Posterior cingulate gyrus (tissue), 11 donors: ENCODE measurements at regions of chr6 and their contacts with region 1.

Region 1: DNA sequence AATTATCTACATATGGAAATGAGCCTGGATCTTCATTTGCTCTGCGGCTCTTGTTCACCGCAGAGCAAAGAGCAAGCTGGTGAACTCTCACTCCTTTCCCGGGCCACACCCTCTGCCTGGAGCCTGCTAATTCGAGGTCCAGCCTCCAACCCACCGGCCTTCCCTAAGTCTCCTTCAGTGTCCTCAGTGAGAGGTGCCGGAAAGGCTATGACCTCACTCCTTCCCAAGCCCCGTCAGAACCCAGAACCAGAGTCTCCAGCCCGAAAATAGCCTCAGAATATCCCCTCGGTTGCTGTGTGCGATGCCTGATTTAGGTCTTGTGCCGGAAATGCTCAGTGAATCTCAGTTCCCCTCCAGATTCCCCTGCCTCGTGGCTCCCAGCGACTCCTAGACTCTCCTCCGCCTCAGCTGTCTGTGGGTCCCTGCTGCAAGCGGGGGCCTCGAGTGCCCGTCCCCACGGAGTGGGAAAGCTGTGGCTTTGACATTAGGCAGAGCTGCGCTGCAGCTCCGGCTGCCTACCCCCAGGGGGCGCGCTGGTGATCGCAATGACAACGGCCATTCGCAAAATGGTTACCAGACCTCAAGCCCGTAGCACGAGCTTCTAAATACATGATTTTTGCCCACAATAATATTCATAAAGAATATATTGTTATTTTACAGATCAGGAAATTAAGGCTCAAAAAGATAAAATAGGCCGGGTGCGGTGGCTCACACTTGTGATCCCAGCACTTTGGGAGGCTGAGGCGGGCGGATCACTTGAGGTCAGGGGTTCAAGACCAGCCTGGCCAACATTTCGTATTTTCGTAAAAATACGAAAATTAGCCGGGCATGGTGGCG is 4.1 kb upstream of the BNIP5 start:
- DNase-seq: peak; percentile 37 to 96 (median 78)

Region 2: GRCh38 chr6:36302227-36302976 is 38.4 kb before region 1 on chr6:
- intact Hi-C with region 1: loop called (anchors 5 kb)
- DNase-seq: peak in 9 of 10 donors; percentile 52 to 95 (median 82)